ENCODE measurements at regions of chr11 and their contacts with region 1.

Region 1: DNA sequence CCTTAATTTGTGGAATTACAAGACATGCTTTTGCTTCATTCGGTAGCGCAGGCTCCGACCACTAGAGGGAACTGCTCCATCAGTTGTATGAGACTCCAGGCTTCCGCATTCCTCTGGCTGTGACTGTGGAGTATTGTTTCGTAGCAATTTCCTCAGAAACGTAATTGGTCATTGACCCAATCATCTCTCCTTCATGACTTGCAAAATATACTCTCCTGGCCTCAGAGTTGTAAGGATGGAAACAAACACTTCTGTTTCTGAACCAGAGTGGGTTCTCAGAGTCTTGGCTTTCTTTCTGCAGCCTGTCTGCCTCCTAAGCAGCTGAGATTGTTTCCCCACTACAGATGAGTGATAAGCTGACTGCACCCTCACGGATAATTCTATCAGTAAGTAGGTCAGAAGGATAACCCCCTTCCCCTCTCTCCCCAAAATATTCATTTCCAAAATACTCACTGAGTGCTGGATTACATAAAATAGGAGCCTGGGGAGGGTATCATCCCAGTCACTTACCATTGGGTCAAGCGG is 146.8 kb upstream of the ZC3H12C start:
- DNase-seq: peak; percentile 64 to 78
- ATAC-seq: peak; percentile 99
- H3K4me3 ChIP-seq: peak overlapping the region; percentile 27 to 37 (median 34)
- H3K27ac ChIP-seq: peak overlapping the region; percentile 64 to 70 (median 66)
- H3K4me1 ChIP-seq: peaks cover 6 to 8% of the 10 kb centered on the region in 2 donors
- H3K27me3 ChIP-seq: no peaks in the 10 kb centered on the region
- CTCF ChIP-seq: peak; percentile 83 to 93 (median 87)
- POLR2A ChIP-seq: peak in 1 of 2 donors; percentile 17

Region 2: DNA sequence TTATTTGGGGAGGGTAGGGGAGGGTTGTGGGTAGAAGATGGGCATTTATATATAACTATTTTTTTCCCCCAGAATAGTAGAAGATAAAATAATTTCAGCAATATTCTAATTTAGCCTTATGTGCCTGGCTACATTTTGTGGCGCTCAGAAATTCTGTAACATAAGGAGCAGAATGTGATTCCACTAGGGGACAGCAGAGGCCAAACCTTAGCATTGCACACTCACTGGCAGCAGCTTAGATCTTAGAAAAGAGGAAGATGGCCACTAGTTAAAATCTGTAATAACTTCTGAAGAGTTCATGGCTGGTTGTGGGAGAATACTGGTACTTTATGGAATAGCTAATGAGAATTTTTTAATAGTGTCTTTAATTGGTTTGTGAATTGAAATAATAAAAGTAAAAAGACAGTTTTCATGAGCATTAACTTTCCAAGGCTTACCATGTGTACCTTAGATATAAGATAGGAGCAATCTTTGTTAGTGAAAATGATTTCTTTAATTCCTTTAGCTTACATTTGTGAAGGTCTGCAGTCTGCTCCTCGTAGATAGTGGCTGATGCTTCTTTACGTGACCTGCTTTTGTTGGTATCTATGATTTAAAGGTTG is 1248.4 kb before region 1 on chr11:
- in situ Hi-C with region 1: loop called in 2 of 4 experiments (anchors 25 kb)
- intact Hi-C with region 1: no loop called
- DNase-seq: peak in 1 of 2 donors; percentile 21
- ATAC-seq: peak in 1 of 2 donors; percentile 81
- H3K4me3 ChIP-seq: no peak overlapping the region
- H3K27ac ChIP-seq: no peak overlapping the region
- H3K4me1 ChIP-seq: no peaks in the 10 kb centered on the region
- H3K27me3 ChIP-seq: no peaks in the 10 kb centered on the region
- CTCF ChIP-seq: peak; percentile 60 to 85 (median 78)
- POLR2A ChIP-seq: no peak

Region 3: GRCh38 chr11:109960831-109961230 is 14.4 kb after region 1 on chr11:
- in situ Hi-C with region 1: no loop called
- intact Hi-C with region 1: no loop called
- DNase-seq: peak; percentile 37 to 67
- ATAC-seq: peak; percentile 82 to 91
- H3K4me3 ChIP-seq: no peak overlapping the region
- H3K27ac ChIP-seq: peak overlapping the region in 1 of 4 donors; percentile 40
- H3K4me1 ChIP-seq: peaks cover 12 to 16% of the 10 kb centered on the region in 2 donors
- H3K27me3 ChIP-seq: no peaks in the 10 kb centered on the region
- CTCF ChIP-seq: no peak
- POLR2A ChIP-seq: no peak

Region 4: DNA sequence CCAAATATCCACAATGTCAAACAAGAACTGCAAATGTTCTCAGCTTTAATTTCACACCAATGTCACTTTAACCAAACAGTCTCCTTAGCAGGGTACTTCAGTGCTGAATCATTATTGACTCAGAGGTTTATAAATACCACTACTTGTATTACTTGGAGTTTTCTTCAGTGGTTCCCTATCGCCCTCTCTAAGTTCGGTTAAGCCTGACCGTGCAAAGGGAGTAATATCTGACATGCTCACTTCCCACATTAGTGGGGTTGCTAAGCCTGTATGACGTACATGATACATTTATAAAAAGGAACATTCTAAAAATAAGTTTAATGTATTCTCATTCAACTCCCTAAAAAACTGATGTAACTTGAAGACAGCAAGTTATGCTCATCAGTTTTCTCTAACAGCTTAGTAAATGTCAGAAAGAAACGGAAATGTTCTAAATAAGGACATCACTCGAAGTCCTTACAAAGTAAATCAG is 53.7 kb after region 1 on chr11:
- in situ Hi-C with region 1: no loop called
- intact Hi-C with region 1: loop called (anchors 2 kb)
- DNase-seq: peak in 1 of 2 donors; percentile 20
- ATAC-seq: peak; percentile 100
- H3K4me3 ChIP-seq: no peak overlapping the region
- H3K27ac ChIP-seq: peak overlapping the region; percentile 60 to 80 (median 75)
- H3K4me1 ChIP-seq: peaks cover 0 to 19% of the 10 kb centered on the region in 2 donors
- H3K27me3 ChIP-seq: no peaks in the 10 kb centered on the region
- CTCF ChIP-seq: no peak
- POLR2A ChIP-seq: no peak

Region 5: GRCh38 chr11:110173811-110174644 is 227.6 kb after region 1 on chr11:
- in situ Hi-C with region 1: no loop called
- intact Hi-C with region 1: loop called (anchors 10 kb)
- DNase-seq: peak in 1 of 2 donors; percentile 43
- ATAC-seq: peak; percentile 49 to 81
- H3K4me3 ChIP-seq: peak overlapping the region in 1 of 4 donors; percentile 4
- H3K27ac ChIP-seq: no peak overlapping the region
- H3K4me1 ChIP-seq: peaks cover 0 to 7% of the 10 kb centered on the region in 2 donors
- H3K27me3 ChIP-seq: no peaks in the 10 kb centered on the region
- CTCF ChIP-seq: peak; percentile 31 to 78 (median 50)
- POLR2A ChIP-seq: no peak

Region 6: DNA sequence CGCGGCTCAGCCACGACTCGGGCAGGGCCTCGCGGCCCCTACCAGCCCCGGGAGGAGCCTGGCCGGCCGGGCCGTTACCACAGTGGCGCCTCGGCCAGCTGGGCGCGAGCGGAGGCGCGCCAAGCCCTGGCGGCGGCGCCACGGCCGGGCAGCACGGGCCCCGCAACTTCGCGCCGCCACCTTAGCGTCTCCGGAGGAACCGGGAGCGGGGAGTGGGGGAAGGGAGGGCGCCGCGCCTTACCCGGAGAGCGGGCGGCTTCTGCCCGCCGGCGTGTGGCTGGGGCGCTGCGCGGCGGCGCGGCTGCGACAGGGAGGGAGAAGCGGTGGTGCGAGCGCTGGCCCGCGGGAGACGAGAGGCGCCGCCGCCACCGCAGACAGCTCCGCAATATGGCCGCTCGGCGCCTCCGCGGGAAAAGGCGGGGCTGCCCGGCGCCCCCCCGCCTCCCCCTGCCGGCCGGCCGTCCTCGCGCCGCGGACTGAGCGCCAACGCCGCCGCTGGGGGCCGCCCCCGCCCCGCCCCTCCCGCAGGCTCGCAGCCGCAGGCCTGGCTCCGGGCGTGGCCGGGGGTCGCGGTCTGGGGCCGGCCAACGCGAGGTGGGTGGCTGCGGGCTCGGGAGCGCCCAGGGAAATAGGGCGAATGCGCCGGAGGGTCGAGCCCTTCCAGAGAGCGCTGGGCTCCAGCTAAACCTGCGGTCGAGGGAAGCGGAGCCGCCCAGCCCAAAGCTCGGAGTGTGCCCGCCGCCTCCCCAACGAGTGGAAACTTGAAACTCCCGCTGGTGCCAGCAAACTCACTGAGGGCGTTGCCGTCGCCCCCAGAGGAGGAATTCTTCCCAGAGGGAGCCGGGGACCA is 350.1 kb after region 1 on chr11 and contains the start of gene RDX:
- in situ Hi-C with region 1: no loop called
- intact Hi-C with region 1: loop called (anchors 1 kb)
- DNase-seq: peak; percentile 47 to 78
- ATAC-seq: peak; percentile 91 to 96
- H3K4me3 ChIP-seq: peak within 1 kb of the TSS; percentile 77 to 96 (median 88)
- H3K27ac ChIP-seq: peak within 1 kb of the TSS; percentile 93 to 99 (median 96)
- H3K4me1 ChIP-seq: peaks cover 31 to 33% of the 10 kb centered on the region in 2 donors
- H3K27me3 ChIP-seq: no peaks in the 10 kb centered on the region
- CTCF ChIP-seq: peak in 2 of 5 experiments; percentile 34 to 35
- POLR2A ChIP-seq: peak; percentile 81 to 84
- total RNA-seq, gene RDX: 95.7 to 140 (median 115) TPM

Region 7: DNA sequence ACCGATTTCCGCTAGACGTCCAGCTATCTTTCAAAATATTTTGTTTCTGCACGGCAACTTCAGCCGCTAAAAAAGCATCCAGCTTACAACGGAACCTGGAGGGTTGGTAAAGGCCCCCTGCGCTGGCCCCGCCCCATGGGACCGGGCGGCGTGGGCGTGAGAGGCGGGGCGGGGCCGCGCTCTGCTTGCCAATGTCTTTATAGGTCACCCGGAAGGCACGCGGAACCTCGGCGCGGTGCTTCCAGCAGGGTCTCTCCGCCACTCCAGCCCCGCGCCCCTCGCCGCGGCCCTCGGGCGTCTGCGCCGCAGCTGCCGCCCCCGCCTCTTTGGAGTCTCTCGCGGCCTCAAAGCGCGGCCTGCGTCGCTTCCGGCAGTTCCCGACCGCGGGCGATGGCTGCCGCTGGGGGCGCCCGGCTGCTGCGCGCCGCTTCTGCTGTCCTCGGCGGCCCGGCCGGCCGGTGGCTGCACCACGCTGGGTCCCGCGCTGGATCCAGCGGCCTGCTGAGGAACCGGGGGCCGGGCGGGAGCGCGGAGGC is 483.4 kb after region 1 on chr11 and contains the start of gene FDX1:
- in situ Hi-C with region 1: no loop called
- intact Hi-C with region 1: loop called (anchors 10 kb)
- DNase-seq: peak; percentile 53 to 73
- ATAC-seq: peak; percentile 91 to 92
- H3K4me3 ChIP-seq: peak within 1 kb of the TSS; percentile 62 to 88 (median 68)
- H3K27ac ChIP-seq: peak within 1 kb of the TSS; percentile 85 to 92 (median 90)
- H3K4me1 ChIP-seq: peaks cover 21 to 24% of the 10 kb centered on the region in 2 donors
- H3K27me3 ChIP-seq: no peaks in the 10 kb centered on the region
- CTCF ChIP-seq: peak in 4 of 5 experiments; percentile 75 to 90 (median 83)
- POLR2A ChIP-seq: peak; percentile 68 to 80
- total RNA-seq, gene FDX1: 13.3 to 25.0 (median 21.3) TPM

Measured in gastrocnemius medialis (tissue), 4 donors.